H1 (cell line): ENCODE measurements at regions of chr13 and their contacts with region 1.

Region 1: GRCh38 chr13:98484289-98485219 is 92.4 kb downstream of the STK24 start:
- DNase-seq: peak in 1 of 2 experiments; percentile 73
- H3K4me3 ChIP-seq: peak overlapping the region in 3 of 4 experiments; percentile 11 to 43 (median 16); a peak in 4 of 8 replicates
- H3K27ac ChIP-seq: peak overlapping the region; percentile 65; the same call in 1 of the 2 replicates
- H3K4me1 ChIP-seq: peaks cover 13 to 48% (median 39%) of the 10 kb centered on the region in 4 experiments
- H3K27me3 ChIP-seq: no peaks in the 10 kb centered on the region
- CTCF ChIP-seq: no peak
- EP300 ChIP-seq: peak; percentile 2 to 61; a peak in 2 of 3 replicates
- POLR2A ChIP-seq: no peak; a peak in 1 of 3 replicates
- RAD21 ChIP-seq: no peak

Region 2: GRCh38 chr13:98445340-98446233 is 39.0 kb before region 1 on chr13:
- CTCF ChIA-PET with region 1: interaction called, 13 read pairs
- POLR2A ChIA-PET with region 1: interaction called, 4 read pairs
- DNase-seq: peak; percentile 64 to 96
- H3K4me3 ChIP-seq: no peak overlapping the region
- H3K27ac ChIP-seq: no peak overlapping the region
- H3K4me1 ChIP-seq: peaks cover under 1 to 16% (median 6%) of the 10 kb centered on the region in 4 experiments; a peak in 6 of 7 replicates
- H3K27me3 ChIP-seq: no peaks in the 10 kb centered on the region
- CTCF ChIP-seq: peak in 2 of 3 experiments; percentile 97 to 99; a peak in 3 of 4 replicates
- EP300 ChIP-seq: no peak
- POLR2A ChIP-seq: peak in 1 of 2 experiments; percentile 37; a peak in 1 of 3 replicates
- RAD21 ChIP-seq: peak; percentile 90 to 94

Region 3: GRCh38 chr13:98495627-98496478 is 11.3 kb after region 1 on chr13:
- CTCF ChIA-PET with region 1: interaction called, 12 read pairs
- POLR2A ChIA-PET with region 1: interaction called, 5 read pairs
- DNase-seq: no peak
- H3K4me3 ChIP-seq: no peak overlapping the region
- H3K27ac ChIP-seq: no peak overlapping the region
- H3K4me1 ChIP-seq: peaks cover 6 to 18% (median 12%) of the 10 kb centered on the region in 4 experiments
- H3K27me3 ChIP-seq: no peaks in the 10 kb centered on the region
- CTCF ChIP-seq: no peak
- EP300 ChIP-seq: no peak
- POLR2A ChIP-seq: no peak
- RAD21 ChIP-seq: no peak

Region 4: GRCh38 chr13:98528663-98529570 is 44.4 kb after region 1 on chr13:
- CTCF ChIA-PET with region 1: interaction called, 11 read pairs
- POLR2A ChIA-PET with region 1: interaction called, 3 read pairs
- DNase-seq: no peak
- H3K4me3 ChIP-seq: no peak overlapping the region
- H3K27ac ChIP-seq: no peak overlapping the region
- H3K4me1 ChIP-seq: peaks cover 0 to 30% (median 14%) of the 10 kb centered on the region in 4 experiments; a peak in 6 of 7 replicates
- H3K27me3 ChIP-seq: no peaks in the 10 kb centered on the region
- CTCF ChIP-seq: no peak
- EP300 ChIP-seq: no peak
- POLR2A ChIP-seq: no peak
- RAD21 ChIP-seq: no peak

Region 5: DNA sequence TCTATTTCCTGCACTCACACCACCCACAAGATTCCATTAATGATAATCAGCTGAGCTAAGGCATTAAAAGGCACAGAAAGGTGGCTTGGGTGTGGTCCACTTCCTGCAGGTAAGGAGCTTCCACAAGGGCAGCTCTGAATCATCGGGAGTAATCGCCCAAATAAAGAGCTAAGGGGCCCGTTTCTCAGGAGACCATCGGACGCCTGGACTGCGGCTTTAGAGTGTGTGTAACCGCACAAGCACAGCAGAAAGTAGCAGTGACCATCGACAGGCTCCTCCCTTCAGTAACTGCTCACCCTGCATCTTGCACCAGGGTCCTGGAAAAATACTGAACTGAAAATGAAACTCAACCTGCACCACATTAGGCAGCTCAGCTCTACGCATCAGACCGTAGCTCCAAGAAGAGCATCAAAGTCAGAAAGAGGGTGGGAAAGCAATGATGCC is 86.4 kb after region 1 on chr13:
- CTCF ChIA-PET with region 1: interaction called, 15 read pairs
- POLR2A ChIA-PET with region 1: interaction called, 11 read pairs
- DNase-seq: no peak
- H3K4me3 ChIP-seq: no peak overlapping the region
- H3K27ac ChIP-seq: no peak overlapping the region
- H3K4me1 ChIP-seq: peaks cover 6 to 34% (median 22%) of the 10 kb centered on the region in 4 experiments
- H3K27me3 ChIP-seq: no peaks in the 10 kb centered on the region
- CTCF ChIP-seq: no peak
- EP300 ChIP-seq: no peak
- POLR2A ChIP-seq: no peak
- RAD21 ChIP-seq: no peak

Region 6: GRCh38 chr13:98672944-98673545 is 188.5 kb after region 1 on chr13:
- CTCF ChIA-PET with region 1: interaction called, 19 read pairs
- POLR2A ChIA-PET with region 1: no interaction called
- DNase-seq: peak; percentile 15 to 76
- H3K4me3 ChIP-seq: peak overlapping the region in 3 of 4 experiments; percentile 5 to 34 (median 7); a peak in 2 of 8 replicates
- H3K27ac ChIP-seq: no peak overlapping the region
- H3K4me1 ChIP-seq: peaks cover 0 to 3% (median 1%) of the 10 kb centered on the region in 4 experiments; a peak in 2 of 7 replicates
- H3K27me3 ChIP-seq: no peaks in the 10 kb centered on the region
- CTCF ChIP-seq: peak; percentile 41 to 87 (median 68)
- EP300 ChIP-seq: no peak
- POLR2A ChIP-seq: no peak
- RAD21 ChIP-seq: peak; percentile 78 to 80